IMR-90 (cell line): ENCODE measurements at regions of chr7 and their contacts with region 1.

Region 1: GRCh38 chr7:18693406-18693805 is 197.9 kb downstream of the HDAC9 start:
- DNase-seq: peak; percentile 89
- ATAC-seq: peak; percentile 95
- H3K4me3 ChIP-seq: no peak overlapping the region
- H3K27ac ChIP-seq: no peak overlapping the region
- H3K4me1 ChIP-seq: no peaks in the 10 kb centered on the region
- H3K27me3 ChIP-seq: no peaks in the 10 kb centered on the region
- CTCF ChIP-seq: peak; percentile 91
- POLR2A ChIP-seq: 0 out of 2 replicates have a peak, but pooled peaks have one; percentile 26
- RAD21 ChIP-seq: peak; percentile 92

Region 2: DNA sequence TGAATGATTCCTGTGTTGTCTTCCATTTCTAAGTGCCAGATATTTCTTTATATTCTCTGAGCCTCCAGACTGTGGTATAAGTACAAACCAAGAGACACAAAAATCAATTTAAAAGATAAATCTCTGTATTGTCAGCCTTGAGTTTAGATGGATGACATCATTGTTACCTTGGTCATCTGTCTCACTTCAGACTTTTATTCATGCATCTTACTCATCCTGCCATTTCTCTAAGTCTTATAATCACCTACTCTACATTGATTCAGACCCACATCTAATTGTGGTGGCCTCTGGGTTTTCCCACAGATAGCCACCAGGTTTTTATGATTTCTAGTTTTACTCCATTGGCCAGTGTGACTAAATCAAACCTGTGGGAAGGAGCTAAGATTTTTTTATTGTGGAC is 224.6 kb before region 1 on chr7:
- CTCF ChIA-PET with region 1: no interaction called
- POLR2A ChIA-PET with region 1: no interaction called
- dilution Hi-C with region 1: no loop called
- in situ Hi-C with region 1: no loop called
- intact Hi-C with region 1: no loop called
- DNase-seq: no peak
- ATAC-seq: no peak
- H3K4me3 ChIP-seq: no peak overlapping the region
- H3K27ac ChIP-seq: no peak overlapping the region
- H3K4me1 ChIP-seq: no peaks in the 10 kb centered on the region
- H3K27me3 ChIP-seq: no peaks in the 10 kb centered on the region
- CTCF ChIP-seq: no peak
- POLR2A ChIP-seq: no peak
- RAD21 ChIP-seq: no peak

Region 3: GRCh38 chr7:19051767-19052375 is 358.5 kb after region 1 on chr7:
- CTCF ChIA-PET with region 1: no interaction called
- POLR2A ChIA-PET with region 1: no interaction called
- dilution Hi-C with region 1: no loop called
- in situ Hi-C with region 1: no loop called
- intact Hi-C with region 1: loop called (anchors 5 kb)
- DNase-seq: peak; percentile 38
- ATAC-seq: peak; percentile 65
- H3K4me3 ChIP-seq: no peak overlapping the region
- H3K27ac ChIP-seq: no peak overlapping the region
- H3K4me1 ChIP-seq: no peaks in the 10 kb centered on the region
- H3K27me3 ChIP-seq: no peaks in the 10 kb centered on the region
- CTCF ChIP-seq: peak; percentile 57
- POLR2A ChIP-seq: no peak
- RAD21 ChIP-seq: peak; percentile 64

Region 4: GRCh38 chr7:19069842-19070241 is 376.4 kb after region 1 on chr7:
- CTCF ChIA-PET with region 1: no interaction called
- POLR2A ChIA-PET with region 1: no interaction called
- dilution Hi-C with region 1: no loop called
- in situ Hi-C with region 1: no loop called
- intact Hi-C with region 1: loop called (anchors 5 kb)
- DNase-seq: peak; percentile 24
- ATAC-seq: peak; percentile 62
- H3K4me3 ChIP-seq: no peak overlapping the region
- H3K27ac ChIP-seq: no peak overlapping the region
- H3K4me1 ChIP-seq: no peaks in the 10 kb centered on the region
- H3K27me3 ChIP-seq: no peaks in the 10 kb centered on the region
- CTCF ChIP-seq: peak; percentile 30; the same call in 1 of the 2 replicates
- POLR2A ChIP-seq: no peak
- RAD21 ChIP-seq: peak; percentile 45

Region 5: DNA sequence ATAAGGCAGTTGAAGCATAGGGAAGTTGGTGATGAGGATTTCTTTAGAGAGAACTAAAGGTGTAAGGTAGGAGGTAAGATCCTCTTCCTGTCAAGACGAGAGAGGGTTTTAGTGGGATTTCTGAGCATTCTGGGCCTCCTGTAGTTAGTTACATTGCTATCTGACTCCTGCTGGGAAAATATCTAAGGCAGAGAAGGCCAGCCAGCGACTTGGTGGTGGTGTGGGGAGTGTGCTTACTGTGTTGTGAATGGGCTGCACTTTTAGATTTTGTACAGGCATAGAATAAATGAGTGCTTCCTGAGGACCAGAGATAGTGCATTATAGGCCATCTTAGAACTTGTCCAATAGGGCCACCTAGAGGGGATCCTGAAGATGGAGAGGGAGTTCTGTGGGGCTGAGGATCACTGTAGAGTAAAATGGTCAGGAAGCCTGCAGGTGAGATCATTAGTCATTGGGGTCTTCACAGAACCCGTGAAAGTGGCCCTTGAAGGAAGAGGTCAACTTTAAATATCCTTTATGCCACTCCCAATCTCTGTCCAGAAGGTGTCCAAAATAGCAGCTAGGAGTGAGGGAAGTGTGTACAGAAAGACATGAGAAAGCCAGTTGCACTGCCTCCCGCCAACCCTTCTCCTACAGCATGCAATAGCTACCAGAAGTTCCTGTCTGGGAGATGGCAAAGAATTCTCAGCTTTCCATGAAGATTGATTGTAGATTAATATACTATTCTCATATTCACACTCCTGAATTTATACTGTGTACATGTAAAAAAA is 748.8 kb after region 1 on chr7:
- CTCF ChIA-PET with region 1: no interaction called
- POLR2A ChIA-PET with region 1: no interaction called
- dilution Hi-C with region 1: no loop called
- in situ Hi-C with region 1: loop called (anchors 25 kb)
- intact Hi-C with region 1: loop called (anchors 1 kb)
- DNase-seq: peak; percentile 75
- ATAC-seq: peak; percentile 99
- H3K4me3 ChIP-seq: no peak overlapping the region
- H3K27ac ChIP-seq: no peak overlapping the region
- H3K4me1 ChIP-seq: no peaks in the 10 kb centered on the region
- H3K27me3 ChIP-seq: no peaks in the 10 kb centered on the region
- CTCF ChIP-seq: peak; percentile 83
- POLR2A ChIP-seq: no peak
- RAD21 ChIP-seq: peak; percentile 91